Mucosa of descending colon (tissue), 3 donors: ENCODE measurements at regions of chr15 and their contacts with region 1.

Region 1: DNA sequence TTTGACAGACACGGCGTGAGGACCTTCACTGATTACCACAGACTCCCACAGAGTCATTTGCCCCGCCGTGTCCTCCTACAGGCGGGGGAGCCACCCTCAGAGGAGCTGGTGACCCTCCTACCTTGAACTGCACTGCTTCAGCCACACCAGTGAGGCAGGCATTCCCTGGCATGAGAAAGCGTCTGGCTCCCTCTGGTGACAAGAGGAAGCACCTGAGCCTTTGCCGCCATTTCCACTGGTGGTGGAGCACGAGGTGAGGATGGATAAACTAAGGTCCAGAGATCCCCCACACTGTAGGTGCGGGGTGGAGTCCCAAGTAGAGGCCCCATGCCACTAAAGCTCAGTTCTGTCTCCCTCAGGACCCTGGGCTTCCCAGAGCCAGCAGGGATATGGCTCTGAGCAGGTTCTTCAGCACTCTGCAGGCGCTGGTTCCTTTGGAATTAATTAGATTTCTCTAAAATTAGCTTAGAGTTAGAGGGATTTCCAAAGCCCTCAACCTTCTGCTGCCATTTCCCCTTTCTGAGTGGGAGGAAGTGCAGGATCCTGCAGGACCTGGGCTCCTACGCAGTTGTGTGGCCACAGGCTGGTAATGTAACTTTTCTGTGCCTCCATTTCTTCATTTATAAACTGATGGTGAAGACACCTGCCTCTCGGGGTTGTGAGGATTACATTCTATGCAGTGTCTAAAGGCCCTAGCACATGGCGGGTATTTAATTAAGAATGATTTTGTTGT is 224.0 kb downstream of the SLCO3A1 start:
- DNase-seq: peak; percentile 57 to 83 (median 79)
- ATAC-seq: peak; percentile 82
- H3K4me3 ChIP-seq: no peak overlapping the region
- H3K4me1 ChIP-seq: no peaks in the 10 kb centered on the region
- CTCF ChIP-seq: peak; percentile 40

Region 2: GRCh38 chr15:91302588-91303439 is 774.7 kb before region 1 on chr15:
- intact Hi-C with region 1: loop called (anchors 5 to 10 kb)
- DNase-seq: peak in 1 of 3 donors; percentile 12
- ATAC-seq: peak; percentile 82
- H3K4me3 ChIP-seq: no peak overlapping the region
- H3K4me1 ChIP-seq: no peaks in the 10 kb centered on the region
- CTCF ChIP-seq: peak; percentile 22

Region 3: DNA sequence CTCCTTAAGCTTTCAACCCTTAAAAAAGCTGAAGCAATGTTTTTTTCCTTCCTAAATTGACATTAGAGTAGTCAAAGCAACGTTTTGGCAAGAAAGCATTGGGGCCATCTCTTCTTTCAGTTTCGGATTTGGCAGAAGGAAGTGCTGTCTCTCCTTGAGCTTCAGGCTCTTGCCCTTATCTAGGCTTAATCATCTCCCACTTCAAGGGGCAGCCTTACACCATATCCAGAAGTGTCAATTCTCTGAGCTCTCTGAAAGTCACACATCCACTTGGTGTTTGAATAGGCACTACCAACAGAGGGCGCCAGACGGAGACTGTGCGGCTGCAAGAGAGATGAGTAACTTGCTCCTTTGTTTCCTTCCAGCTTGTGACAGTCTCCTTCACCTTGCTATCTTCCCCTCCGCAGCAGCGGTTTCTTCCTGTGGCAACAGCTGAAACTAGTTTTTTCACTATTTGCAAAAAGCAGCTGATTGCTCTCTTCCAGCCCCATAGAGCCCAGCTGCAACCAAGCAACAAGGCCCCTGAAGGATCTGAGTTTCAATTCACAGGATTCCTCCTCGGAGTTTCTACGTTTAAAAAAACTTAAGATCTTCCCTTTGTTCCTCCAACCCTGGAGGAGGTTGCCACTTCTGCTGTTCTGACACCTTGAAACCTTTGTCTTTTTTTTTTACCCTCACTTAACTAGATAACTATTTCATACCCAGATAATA is 371.0 kb before region 1 on chr15:
- intact Hi-C with region 1: loop called (anchors 10 kb)
- DNase-seq: peak; percentile 60 to 89 (median 64)
- ATAC-seq: peak; percentile 94
- H3K4me3 ChIP-seq: no peak overlapping the region
- H3K4me1 ChIP-seq: no peaks in the 10 kb centered on the region
- CTCF ChIP-seq: peak; percentile 85

Region 4: GRCh38 chr15:91852741-91853510 is 224.6 kb before region 1 on chr15:
- intact Hi-C with region 1: loop called (anchors 10 kb)
- DNase-seq: peak; percentile 70 to 86 (median 83)
- ATAC-seq: peak; percentile 82
- H3K4me3 ChIP-seq: peak overlapping the region; percentile 56
- H3K4me1 ChIP-seq: peaks cover 29% of the 10 kb centered on the region
- CTCF ChIP-seq: peak; percentile 68